ENCODE measurements at regions of chr9 and their contacts with region 1.

Region 1: DNA sequence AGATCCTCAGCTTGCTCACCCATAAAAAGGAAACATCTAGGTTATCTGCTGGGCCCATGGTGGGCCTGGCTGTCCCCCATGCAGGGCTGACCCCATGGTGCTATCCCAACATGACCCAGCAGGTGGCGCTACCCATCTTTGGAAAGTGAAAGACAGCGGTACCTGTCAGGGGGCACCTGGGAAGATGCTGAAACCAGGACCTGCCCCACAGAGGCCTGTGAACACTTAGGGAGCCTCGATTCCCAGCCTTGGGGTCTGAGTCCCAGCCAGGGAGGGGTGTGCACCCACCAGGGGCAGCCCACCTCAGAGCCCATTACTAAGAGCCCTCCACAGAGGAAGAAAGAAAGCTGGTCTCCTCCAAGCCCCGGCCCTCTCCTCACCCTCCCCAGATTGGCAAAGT is 46.6 kb upstream of the IPPK start:
- DNase-seq: peak; percentile 54 to 85 (median 84)
- ATAC-seq: peak; percentile 15 to 50
- H3K4me3 ChIP-seq: no peak overlapping the region
- H3K27ac ChIP-seq: no peak overlapping the region
- H3K4me1 ChIP-seq: no peaks in the 10 kb centered on the region
- H3K27me3 ChIP-seq: no peaks in the 10 kb centered on the region

Region 2: GRCh38 chr9:92764988-92765936 is 48.7 kb after region 1 on chr9:
- intact Hi-C with region 1: loop called in 1 of 4 experiments (anchors 10 kb)
- DNase-seq: peak; percentile 99 to 100 (median 100)
- ATAC-seq: peak; percentile 98
- H3K4me3 ChIP-seq: peak overlapping the region; percentile 79
- H3K27ac ChIP-seq: peak overlapping the region; percentile 100
- H3K4me1 ChIP-seq: peaks cover 26% of the 10 kb centered on the region
- H3K27me3 ChIP-seq: no peaks in the 10 kb centered on the region

Region 3: DNA sequence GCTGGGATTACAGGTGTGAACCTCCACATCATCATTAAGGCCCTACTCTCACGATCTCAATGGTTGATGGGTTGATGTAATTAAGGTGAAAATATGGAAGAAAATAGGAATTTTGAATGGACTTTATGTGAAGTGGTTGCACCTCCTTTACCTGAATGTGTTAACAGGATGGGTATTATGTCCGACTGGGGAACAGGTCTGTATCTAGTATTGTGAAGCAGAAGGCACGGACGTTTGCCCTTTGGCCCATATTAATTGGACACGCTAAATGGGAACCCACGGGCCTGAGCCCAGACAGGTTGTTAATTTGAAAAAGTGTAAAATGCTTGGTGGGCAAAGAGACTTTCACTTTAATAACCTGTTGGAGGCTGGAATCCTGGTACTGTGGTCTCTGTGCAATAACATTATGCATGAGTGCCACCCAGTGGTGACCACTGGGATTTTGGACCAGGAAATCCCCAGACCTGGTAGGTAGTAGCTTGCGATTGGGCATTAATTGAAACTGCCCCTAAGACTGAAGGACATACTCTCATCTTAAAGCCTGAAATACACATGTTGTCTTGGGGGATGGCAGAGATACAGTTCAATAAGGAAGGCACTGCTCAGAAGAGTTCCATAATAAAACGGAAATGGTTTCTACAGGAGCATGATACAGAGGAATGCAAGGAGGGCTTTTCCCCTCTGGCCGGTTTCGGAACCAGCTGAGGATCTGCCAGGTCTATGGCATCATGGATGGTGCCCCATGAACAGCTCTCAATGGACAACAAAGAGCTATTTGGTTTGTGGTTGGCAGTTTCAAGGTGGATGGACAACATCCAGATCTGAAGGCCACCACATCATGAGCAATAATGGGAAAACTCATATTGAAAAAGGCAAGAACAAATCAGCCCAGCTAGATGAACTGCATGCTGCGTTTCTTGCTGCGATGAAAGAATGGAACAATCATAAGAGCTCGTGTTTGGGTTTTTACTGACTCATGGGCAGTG is 74.3 kb after region 1 on chr9:
- intact Hi-C with region 1: loop called (anchors 2 to 10 kb)
- DNase-seq: peak; percentile 73 to 91 (median 85)
- ATAC-seq: peak; percentile 93 to 94
- H3K4me3 ChIP-seq: no peak overlapping the region
- H3K27ac ChIP-seq: no peak overlapping the region
- H3K4me1 ChIP-seq: no peaks in the 10 kb centered on the region
- H3K27me3 ChIP-seq: no peaks in the 10 kb centered on the region

Region 4: GRCh38 chr9:93223260-93224180 is 507.0 kb after region 1 on chr9:
- intact Hi-C with region 1: no loop called
- DNase-seq: peak; percentile 30 to 67 (median 52)
- ATAC-seq: peak; percentile 52 to 63
- H3K4me3 ChIP-seq: no peak overlapping the region
- H3K27ac ChIP-seq: peak overlapping the region; percentile 43
- H3K4me1 ChIP-seq: peaks cover 3% of the 10 kb centered on the region
- H3K27me3 ChIP-seq: no peaks in the 10 kb centered on the region